Activated T-helper 2 cell treated with anti-CD3 and anti-CD28 coated beads, Interferon-gamma antibody, Interleukin-2, Interleukin-4, amounts not matched to agents 10 μg/mL and 5 μg/mL and 100 μg/mL, durations not matched to agents 14 hours and 24 hours and 36 hours (primary cell): ENCODE measurements at regions of chr10 and their contacts with region 1.

Region 1: DNA sequence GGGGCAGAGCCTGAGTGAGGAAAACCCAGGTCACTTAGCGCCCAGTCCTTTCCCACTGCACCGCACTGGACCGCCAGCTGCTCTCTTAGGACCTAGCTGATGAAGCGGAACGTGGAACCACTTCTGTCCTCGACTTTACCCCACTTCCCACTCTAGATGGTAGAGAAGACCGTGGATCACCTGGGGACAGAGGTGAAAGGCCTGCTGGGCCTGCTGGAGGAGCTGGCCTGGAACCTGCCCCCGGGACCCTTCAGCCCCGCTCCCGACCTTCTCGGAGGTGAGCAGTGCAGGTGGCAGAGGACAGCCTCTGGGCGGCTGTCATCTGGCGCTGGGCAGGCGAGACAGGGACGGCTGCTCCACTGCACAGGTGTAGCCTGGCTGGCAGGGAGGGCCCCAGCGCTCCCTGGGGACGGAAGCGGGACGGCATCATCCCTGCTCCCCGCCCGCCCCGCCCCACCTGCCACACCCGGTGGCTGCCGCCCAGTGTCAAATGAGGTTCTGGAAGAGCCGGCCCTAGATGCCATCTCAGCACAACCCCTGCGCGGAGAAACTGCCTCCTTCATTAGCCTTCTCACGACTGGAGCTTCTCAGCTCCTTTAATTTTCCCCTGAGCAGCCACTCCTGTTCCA is 11.7 kb downstream of the PLAC9 start:
- DNase-seq: no peak
- H3K4me3 Mint-ChIP-seq: peak overlapping the region; percentile 70
- H3K27ac Mint-ChIP-seq: no peak overlapping the region
- H3K4me1 Mint-ChIP-seq: peaks cover 16% of the 10 kb centered on the region
- H3K27me3 Mint-ChIP-seq: peaks cover 9% of the 10 kb centered on the region

Region 2: DNA sequence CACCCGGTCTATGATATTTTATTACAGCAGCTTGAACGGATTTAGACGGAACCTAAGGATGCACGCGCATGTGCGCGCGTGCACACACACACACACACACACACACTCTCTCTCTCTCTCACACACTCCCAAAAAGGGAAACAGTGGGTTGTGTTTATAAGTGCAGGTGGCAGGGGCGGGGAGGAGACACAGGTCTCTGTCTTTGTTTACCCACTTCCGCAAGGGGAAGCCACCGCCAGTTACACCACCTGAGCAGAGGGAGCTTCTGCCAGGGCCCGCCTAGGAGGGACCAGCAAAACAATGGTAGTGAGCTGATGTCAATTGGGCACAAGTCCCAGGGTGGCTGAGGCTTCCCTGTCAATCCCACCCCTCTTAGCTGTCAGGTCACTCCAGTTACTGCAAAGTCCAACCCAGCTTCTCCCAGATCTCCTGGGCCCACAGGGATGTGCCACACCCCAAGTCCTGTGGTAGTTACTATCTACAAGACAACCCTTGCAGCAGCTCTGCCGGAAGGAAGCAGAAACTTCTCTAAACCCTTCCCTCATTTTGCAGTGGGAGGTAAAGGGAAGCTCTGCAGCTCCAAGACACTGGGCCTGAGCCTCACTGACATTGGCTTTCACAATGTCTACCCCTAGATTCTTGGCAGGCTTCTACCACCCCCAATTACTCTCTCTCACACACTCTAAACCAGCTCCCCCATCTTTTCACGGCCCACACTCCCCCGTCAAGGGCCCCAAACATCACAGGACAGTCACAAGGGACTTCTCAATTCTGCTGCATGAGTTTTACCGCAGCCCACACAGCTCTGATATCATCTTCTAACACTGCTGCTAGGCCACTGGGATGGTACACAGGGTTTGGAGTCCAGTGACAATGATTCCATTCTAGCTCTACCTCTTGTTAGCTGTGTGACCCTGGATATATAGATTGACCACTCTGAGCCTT is 43.6 kb after region 1 on chr10:
- intact Hi-C with region 1: loop called (anchors 5 kb)
- DNase-seq: peak; percentile 81
- H3K4me3 Mint-ChIP-seq: peak overlapping the region; percentile 70
- H3K27ac Mint-ChIP-seq: peak overlapping the region; percentile 92
- H3K4me1 Mint-ChIP-seq: peaks cover 71% of the 10 kb centered on the region
- H3K27me3 Mint-ChIP-seq: no peaks in the 10 kb centered on the region

Region 3: DNA sequence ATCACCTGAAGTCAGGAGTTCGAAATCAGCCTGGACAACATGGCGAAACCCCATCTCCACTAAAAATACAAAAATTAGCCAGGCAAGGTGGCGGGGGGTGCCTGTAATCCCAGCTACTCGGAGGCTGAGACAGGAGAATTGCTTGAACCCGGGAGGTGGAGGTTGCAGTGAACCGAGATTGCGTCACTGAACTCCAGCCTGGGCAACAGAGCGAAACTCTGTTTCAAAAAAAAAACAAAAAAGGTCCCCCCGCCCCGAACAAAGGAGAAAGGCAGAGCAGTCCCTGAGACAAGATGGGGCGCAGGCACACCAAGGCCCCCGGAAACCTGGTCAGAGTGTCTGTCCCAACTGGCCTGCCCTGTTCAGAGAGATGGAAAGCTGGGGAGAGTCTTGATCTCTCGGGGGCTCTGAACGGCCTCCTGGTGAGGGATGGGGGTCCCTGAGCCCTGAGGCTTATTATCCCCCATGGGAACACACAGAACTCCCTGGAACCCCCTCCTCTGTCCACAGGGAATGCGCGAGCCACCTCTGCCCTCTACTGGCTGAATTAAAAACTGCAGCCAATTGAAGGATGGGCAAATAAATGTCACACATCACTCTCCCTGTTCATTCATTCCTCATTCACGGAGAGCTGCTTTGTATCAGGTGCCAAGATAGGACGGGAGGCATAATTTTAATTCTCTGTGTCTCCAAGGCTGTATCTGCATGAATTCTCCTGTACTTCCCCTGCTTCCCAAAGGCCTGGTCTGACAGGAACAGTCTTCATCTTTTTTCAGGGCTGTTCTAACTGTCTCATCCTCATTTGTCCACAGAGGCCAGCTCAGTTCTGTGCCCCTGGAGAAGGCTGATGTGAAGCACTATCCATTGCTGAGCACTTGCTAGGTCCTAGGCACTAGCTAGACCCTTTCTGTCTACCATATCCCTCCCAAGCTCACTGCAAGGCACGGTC is 116.4 kb after region 1 on chr10:
- intact Hi-C with region 1: loop called (anchors 1 kb)
- DNase-seq: no peak
- H3K4me3 Mint-ChIP-seq: no peak overlapping the region
- H3K27ac Mint-ChIP-seq: no peak overlapping the region
- H3K4me1 Mint-ChIP-seq: no peaks in the 10 kb centered on the region
- H3K27me3 Mint-ChIP-seq: peaks cover 9% of the 10 kb centered on the region